Stomach (tissue), 19 donors: ENCODE measurements at regions of chr20 and their contacts with region 1.

Region 1: DNA sequence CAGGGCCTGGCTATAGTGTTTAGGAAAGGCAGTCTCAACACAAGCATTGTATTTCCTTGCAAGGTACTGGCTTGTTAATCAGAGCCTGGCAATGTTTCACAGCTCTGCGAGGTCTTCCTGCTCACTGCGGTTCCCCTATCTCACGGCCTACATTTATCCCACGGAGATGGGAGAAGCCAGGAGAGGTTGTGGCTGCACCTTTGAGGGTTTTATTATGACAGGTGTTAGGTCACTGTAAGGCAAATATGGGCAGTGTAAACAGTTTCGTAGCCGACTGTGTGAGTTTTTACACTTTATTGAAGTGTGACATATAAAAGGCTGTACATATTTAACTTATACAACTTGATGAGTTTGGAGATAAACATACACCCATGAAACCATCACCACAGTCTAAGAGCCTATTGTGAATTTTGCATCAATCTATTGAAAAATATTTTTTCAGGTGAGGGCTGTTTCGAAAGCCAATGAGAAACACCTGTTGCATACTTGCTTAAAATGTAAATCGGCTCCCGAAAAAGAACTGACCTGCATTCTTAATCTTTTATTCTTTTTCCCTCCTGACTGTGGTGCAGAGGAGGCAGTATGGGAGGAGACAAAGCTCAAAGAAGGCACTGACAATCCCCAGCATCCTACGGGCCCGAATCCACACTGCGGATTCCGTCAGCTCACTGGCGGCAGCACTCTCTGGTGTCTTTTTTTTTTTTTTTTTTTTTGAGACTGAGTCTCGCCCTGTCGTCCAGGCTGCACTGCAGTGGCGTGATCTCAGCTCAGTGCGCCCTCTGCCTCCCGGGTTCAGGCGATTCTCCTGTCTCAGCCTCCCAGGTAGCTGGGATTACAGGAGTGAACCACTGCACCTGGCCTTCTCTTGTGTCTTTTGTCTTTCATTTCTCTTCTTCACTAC is 7.5 kb upstream of the RBM38 start:
- DNase-seq: no peak
- H3K4me3 ChIP-seq: no peak overlapping the region
- H3K27ac ChIP-seq: no peak overlapping the region
- H3K4me1 ChIP-seq: peaks cover 0 to 9% (median under 1%) of the 10 kb centered on the region in 4 donors
- H3K27me3 ChIP-seq: no peaks in the 10 kb centered on the region
- CTCF ChIP-seq: no peak
- EP300 ChIP-seq: no peak
- POLR2A ChIP-seq: no peak

Region 2: GRCh38 chr20:57118107-57118769 is 265.5 kb before region 1 on chr20:
- intact Hi-C with region 1: no loop called
- DNase-seq: no peak
- H3K4me3 ChIP-seq: no peak overlapping the region
- H3K27ac ChIP-seq: no peak overlapping the region
- H3K4me1 ChIP-seq: no peaks in the 10 kb centered on the region
- H3K27me3 ChIP-seq: peaks cover 0 to 14% (median 0%) of the 10 kb centered on the region in 3 donors
- CTCF ChIP-seq: no peak
- EP300 ChIP-seq: no peak
- POLR2A ChIP-seq: no peak

Region 3: DNA sequence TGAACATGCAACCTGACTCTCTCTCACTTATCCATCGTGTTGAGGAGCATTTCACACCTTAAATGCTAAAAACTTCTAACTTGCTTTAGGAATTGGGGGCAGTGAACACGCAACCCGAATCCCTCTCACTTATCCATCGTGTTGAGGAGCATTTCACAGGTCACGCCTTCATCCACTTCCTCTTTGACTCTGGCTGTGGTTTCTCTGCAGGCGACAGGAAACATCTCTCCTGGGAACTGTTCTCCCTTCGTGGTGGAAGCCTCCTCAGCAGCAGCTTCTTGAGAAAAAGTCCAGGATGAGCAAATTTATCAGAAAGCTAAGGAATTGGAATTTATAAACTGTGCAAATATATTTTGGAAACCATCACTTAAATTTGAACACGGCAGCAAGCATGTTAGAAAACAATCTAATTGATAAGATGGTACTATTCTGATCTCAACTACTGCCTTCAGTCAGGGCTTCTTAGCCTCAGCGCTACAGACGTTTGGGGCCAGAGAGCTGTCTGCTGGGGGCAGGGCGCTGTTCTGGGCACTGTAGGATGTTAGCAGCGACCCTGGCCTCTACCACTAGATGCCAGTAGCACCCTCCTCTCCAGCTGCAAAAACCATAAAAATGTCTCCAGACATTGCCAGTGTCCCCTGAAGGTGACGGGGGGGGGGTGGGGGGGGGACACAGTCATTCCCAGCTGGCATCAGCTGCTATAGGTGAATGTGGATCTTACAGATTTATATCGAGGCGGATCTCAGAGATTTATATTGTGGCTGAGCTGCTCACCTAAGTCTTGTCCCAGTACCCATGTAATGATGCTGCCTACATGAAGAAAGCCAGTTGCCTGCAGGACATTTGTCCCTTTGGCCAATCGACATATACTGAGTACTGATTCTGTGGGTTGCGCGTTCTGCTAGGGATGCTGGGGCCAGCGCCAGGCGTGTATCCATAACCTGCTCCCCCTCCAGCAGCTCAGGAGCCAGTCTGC is 115.0 kb after region 1 on chr20:
- intact Hi-C with region 1: loop called (anchors 5 kb)
- DNase-seq: peak in 1 of 2 donors; percentile 57
- H3K4me3 ChIP-seq: no peak overlapping the region
- H3K27ac ChIP-seq: no peak overlapping the region
- H3K4me1 ChIP-seq: peaks cover 5 to 27% (median 12%) of the 10 kb centered on the region in 4 donors
- H3K27me3 ChIP-seq: peaks cover 0 to 22% (median 8%) of the 10 kb centered on the region in 3 donors
- CTCF ChIP-seq: no peak
- EP300 ChIP-seq: no peak
- POLR2A ChIP-seq: no peak